Prostate gland (tissue), 2 donors: ENCODE measurements at regions of chr6 and their contacts with region 1.

Region 1: DNA sequence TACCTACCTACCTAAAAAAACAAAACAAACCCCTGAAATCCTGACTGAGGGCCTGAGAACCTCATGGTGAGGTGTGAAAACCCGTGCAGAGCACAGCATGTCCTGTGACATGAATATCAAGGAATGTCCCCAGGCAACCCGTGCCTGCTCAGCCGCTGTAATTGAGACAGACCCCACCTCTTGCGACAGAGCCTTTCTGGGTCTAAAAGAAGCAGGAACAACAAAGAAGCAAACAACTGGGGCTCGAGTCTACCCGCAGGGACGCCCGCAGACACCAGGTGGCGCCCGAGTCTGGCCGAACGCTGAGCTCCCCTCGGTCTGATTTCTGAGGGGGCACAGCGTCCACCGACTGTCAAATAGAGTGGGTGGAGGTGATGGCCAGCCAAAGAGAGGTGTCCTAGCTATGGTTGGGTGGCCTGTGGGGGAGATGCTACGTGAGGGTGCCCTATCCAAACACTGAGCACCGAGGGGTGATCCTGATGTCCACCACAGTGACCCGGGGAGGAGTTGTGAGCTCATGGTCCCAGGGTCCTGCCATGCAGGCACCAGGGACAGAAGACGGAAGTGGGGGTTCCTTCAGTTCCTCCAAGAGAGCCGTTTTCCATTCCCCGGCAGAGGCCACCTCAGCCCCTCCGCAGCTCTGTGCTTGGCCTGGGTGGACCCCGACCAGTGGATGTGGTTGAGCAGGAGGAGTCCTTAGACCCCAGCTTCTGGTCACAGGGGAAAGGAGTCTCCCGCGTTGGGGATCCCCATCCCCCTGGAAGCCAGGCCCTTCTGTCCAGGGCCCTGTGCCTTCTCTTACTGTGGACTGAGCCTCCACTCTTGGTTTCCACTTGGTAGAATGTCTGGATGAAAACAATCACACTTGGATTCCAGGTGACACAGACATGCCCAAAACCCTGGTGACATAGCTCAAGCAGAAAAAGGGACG is 268.2 kb downstream of the CDC5L start:
- DNase-seq: peak; percentile 73
- H3K4me3 ChIP-seq: no peak overlapping the region
- H3K27ac ChIP-seq: peak overlapping the region; percentile 51 to 53
- H3K4me1 ChIP-seq: peaks cover 3% of the 10 kb centered on the region
- H3K27me3 ChIP-seq: no peaks in the 10 kb centered on the region
- CTCF ChIP-seq: peak; percentile 87 to 97 (median 94)
- POLR2A ChIP-seq: no peak

Region 2: DNA sequence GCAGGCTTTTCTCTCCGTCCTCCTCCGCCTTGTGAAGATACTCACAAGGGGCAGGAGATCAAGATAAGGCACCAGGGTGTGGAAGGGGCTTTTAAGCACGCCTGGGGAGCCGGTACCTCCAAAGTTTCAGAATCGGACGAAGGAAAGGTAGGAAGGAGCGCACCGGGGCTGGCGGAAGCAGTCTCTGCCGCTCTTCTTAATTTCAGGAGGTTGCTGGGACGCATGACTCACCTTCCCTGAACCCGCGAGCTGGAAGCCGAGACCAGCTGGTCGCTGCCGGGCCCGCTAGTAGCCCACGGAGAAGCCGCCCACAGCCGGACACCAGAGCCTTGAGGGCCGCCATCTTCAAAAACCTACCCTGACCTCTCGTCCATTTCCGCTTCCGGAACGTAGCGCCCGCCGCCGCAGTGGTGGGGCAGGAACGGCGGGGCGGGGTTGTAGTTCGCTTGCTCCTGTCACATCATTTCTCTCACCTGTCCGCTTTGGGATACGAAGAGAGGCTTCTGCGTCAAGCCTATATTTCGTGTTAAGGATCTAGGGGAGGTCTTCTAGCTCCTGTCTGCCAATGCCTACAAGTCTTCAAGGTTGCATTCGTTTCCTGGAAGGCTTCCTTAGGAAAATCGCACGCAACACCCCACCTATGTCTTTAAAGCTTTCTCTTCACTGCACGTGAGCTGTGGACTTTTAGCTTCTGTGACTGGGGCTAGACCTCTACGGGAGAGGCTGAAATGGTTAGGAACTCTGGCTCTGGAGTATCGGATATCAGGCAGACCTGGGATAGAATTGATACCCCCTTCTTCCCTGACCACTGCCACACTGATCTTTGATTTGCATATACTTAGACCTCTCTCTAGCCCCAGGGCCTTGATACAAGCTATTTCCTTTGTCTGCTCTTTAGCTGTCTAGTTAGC is 968.0 kb before region 1 on chr6 and contains the start of gene MRPS18A:
- intact Hi-C with region 1: no loop called
- DNase-seq: peak; percentile 78
- H3K4me3 ChIP-seq: peak within 1 kb of the TSS; percentile 58 to 76
- H3K27ac ChIP-seq: peak within 1 kb of the TSS; percentile 62 to 76
- H3K4me1 ChIP-seq: peaks cover 21% of the 10 kb centered on the region
- H3K27me3 ChIP-seq: no peaks in the 10 kb centered on the region
- CTCF ChIP-seq: no peak
- POLR2A ChIP-seq: peak; percentile 53
- total RNA-seq, gene MRPS18A: 56.6 to 56.9 TPM

Region 3: GRCh38 chr6:44569931-44570385 is 85.7 kb before region 1 on chr6:
- intact Hi-C with region 1: no loop called
- DNase-seq: peak; percentile 50
- H3K4me3 ChIP-seq: no peak overlapping the region
- H3K27ac ChIP-seq: no peak overlapping the region
- H3K4me1 ChIP-seq: no peaks in the 10 kb centered on the region
- H3K27me3 ChIP-seq: no peaks in the 10 kb centered on the region
- CTCF ChIP-seq: no peak
- POLR2A ChIP-seq: no peak

Region 4: GRCh38 chr6:45377554-45378333 is 722.1 kb after region 1 on chr6 and contains the start of gene SUPT3H:
- intact Hi-C with region 1: loop called (anchors 5 kb)
- DNase-seq: peak; percentile 86
- H3K4me3 ChIP-seq: peak within 1 kb of the TSS; percentile 82 to 92
- H3K27ac ChIP-seq: peak within 1 kb of the TSS; percentile 97
- H3K4me1 ChIP-seq: no peaks in the 10 kb centered on the region
- H3K27me3 ChIP-seq: no peaks in the 10 kb centered on the region
- CTCF ChIP-seq: peak in 2 of 4 experiments; percentile 32 to 39
- POLR2A ChIP-seq: peak; percentile 67
- total RNA-seq, gene SUPT3H: 4.6 to 13.1 TPM

Region 5: GRCh38 chr6:45421709-45422502 is 766.2 kb after region 1 on chr6:
- intact Hi-C with region 1: loop called (anchors 5 kb)
- DNase-seq: peak; percentile 61
- H3K4me3 ChIP-seq: peak overlapping the region; percentile 45 to 64
- H3K27ac ChIP-seq: peak overlapping the region; percentile 76 to 79
- H3K4me1 ChIP-seq: no peaks in the 10 kb centered on the region
- H3K27me3 ChIP-seq: no peaks in the 10 kb centered on the region
- CTCF ChIP-seq: peak; percentile 10 to 60 (median 35)
- POLR2A ChIP-seq: peak; percentile 29

Region 6: GRCh38 chr6:45714741-45715507 is 1059.2 kb after region 1 on chr6:
- intact Hi-C with region 1: loop called (anchors 1 kb)
- DNase-seq: peak; percentile 77
- H3K4me3 ChIP-seq: no peak overlapping the region
- H3K27ac ChIP-seq: no peak overlapping the region
- H3K4me1 ChIP-seq: no peaks in the 10 kb centered on the region
- H3K27me3 ChIP-seq: no peaks in the 10 kb centered on the region
- CTCF ChIP-seq: peak; percentile 39 to 87 (median 72)
- POLR2A ChIP-seq: no peak

Region 7: DNA sequence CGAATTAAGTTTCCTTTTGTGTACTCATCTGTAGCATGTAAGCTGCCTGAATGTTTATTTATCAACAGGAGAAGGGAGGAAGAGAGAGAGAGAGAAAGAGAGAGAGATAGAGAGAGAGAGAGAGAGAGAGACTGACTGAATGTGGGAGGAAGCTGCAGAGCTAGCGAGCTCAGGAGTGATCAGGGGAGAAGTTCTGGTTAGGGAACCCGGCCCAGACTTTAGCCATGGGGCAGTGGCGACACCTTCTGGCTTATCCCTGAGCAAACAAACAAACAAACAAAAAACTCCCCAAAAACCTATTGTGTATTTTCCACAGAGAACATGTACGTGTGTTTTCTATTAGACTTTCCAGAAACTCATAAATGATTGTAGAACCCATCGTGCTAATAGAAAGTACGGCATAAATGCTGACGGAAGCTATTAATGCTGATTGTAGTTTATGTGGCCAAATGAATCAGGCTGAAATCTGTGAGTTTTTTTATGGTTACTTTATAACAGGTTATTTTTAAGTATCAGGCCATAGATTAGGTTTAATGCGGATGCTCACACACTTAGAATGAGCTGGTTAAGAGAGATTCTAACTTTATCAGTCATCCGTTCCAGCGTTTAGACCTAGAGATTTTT is 1267.2 kb after region 1 on chr6:
- intact Hi-C with region 1: loop called (anchors 5 kb)
- DNase-seq: peak; percentile 58
- H3K4me3 ChIP-seq: no peak overlapping the region
- H3K27ac ChIP-seq: no peak overlapping the region
- H3K4me1 ChIP-seq: no peaks in the 10 kb centered on the region
- H3K27me3 ChIP-seq: no peaks in the 10 kb centered on the region
- CTCF ChIP-seq: peak; percentile 39 to 80 (median 70)
- POLR2A ChIP-seq: no peak